ENCODE measurements at regions of chr10 and their contacts with region 1.

Region 1: DNA sequence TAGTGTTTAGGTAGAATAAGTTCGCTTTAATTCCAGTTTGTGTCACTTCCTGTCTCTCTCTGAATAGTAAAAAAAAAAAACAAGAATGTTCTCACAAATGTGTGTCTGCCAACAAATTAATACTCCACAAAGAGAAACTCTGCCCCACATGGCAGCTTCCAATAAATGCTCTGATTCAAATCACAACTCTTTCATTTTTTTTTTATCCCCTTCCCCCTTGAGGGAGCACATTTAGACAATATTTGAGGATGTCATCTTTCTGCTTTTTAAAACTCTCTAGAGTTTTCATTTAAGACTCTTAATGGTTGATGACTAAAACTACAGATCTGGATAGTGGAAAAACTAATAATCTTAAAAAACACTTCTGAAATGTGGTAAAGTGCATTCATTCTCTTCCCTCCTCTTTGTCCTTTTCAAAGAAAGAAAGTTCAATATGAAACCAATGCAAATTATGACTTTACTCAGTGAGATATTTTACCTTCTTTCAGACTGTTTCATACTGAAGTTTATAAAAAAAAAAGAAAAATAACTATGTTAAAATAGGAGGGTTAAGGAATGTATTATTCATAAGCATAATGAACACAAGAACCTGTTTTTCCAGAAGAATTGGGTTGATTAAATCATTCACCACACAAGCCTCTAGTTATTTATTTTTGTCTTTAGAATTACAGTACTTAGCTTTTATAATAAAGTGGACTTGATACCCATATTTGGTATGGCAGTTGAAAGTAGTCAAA is 42.3 kb downstream of the ARID5B start:
- DNase-seq: peak in 7 of 9 donors; percentile 25 to 58 (median 36)
- ATAC-seq: peak; percentile 65
- H3K4me3 ChIP-seq: peak overlapping the region; percentile 15
- H3K4me3 Mint-ChIP-seq: peak overlapping the region; percentile 60 to 86 (median 69)
- H3K27ac ChIP-seq: peak overlapping the region; percentile 58
- H3K27ac Mint-ChIP-seq: peak overlapping the region; percentile 47 to 94 (median 88)
- H3K4me1 ChIP-seq: peaks cover 28 to 46% of the 10 kb centered on the region in 2 donors
- H3K4me1 Mint-ChIP-seq: peaks cover 29 to 55% (median 51%) of the 10 kb centered on the region in 7 donors
- H3K27me3 ChIP-seq: no peaks in the 10 kb centered on the region
- H3K27me3 Mint-ChIP-seq: no peaks in the 10 kb centered on the region

Region 2: DNA sequence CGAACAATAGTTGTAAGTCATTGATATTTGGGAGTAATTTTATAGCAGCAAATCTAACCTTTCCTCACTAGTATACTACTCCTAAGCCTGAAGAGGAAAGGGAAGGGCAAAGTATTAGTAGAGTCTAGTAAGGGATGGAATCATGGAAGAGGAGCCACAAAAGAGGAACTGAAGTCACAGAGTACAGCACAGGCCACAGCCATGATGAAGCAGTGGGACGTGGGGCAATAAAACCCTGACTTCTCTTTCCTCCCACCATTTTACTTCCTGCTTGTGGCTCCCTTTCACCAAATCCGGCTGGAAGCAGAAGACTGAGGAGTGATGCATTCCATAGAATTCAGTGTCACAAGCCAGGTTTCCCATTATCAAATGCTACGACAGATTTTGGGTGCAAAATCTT is 222.4 kb before region 1 on chr10:
- CTCF ChIA-PET with region 1: no interaction called
- POLR2A ChIA-PET with region 1: no interaction called
- intact Hi-C with region 1: no loop called
- DNase-seq: no peak
- ATAC-seq: no peak
- H3K4me3 ChIP-seq: no peak overlapping the region
- H3K4me3 Mint-ChIP-seq: no peak overlapping the region
- H3K27ac ChIP-seq: no peak overlapping the region
- H3K27ac Mint-ChIP-seq: peak overlapping the region in 1 of 9 donors; percentile 46
- H3K4me1 ChIP-seq: no peaks in the 10 kb centered on the region
- H3K4me1 Mint-ChIP-seq: no peaks in the 10 kb centered on the region
- H3K27me3 ChIP-seq: no peaks in the 10 kb centered on the region
- H3K27me3 Mint-ChIP-seq: peaks cover 3 to 30% (median 23%) of the 10 kb centered on the region in 5 donors

Region 3: GRCh38 chr10:61923213-61923949 is 20.5 kb before region 1 on chr10:
- CTCF ChIA-PET with region 1: interaction called, 3 read pairs
- POLR2A ChIA-PET with region 1: no interaction called
- intact Hi-C with region 1: loop called in 1 of 2 experiments (anchors 2 kb)
- DNase-seq: no peak
- ATAC-seq: no peak
- H3K4me3 ChIP-seq: no peak overlapping the region
- H3K4me3 Mint-ChIP-seq: peak overlapping the region in 1 of 10 donors; percentile 39
- H3K27ac ChIP-seq: no peak overlapping the region
- H3K27ac Mint-ChIP-seq: peak overlapping the region in 4 of 9 donors; percentile 12 to 80 (median 64)
- H3K4me1 ChIP-seq: no peaks in the 10 kb centered on the region
- H3K4me1 Mint-ChIP-seq: peaks cover 23 to 69% (median 55%) of the 10 kb centered on the region in 7 donors
- H3K27me3 ChIP-seq: no peaks in the 10 kb centered on the region
- H3K27me3 Mint-ChIP-seq: no peaks in the 10 kb centered on the region

Region 4: GRCh38 chr10:61987951-61988379 is 44.1 kb after region 1 on chr10:
- CTCF ChIA-PET with region 1: no interaction called
- POLR2A ChIA-PET with region 1: no interaction called
- intact Hi-C with region 1: loop called (anchors 1 to 2 kb)
- DNase-seq: peak in 7 of 9 donors; percentile 3 to 49 (median 21)
- ATAC-seq: peak; percentile 78
- H3K4me3 ChIP-seq: no peak overlapping the region
- H3K4me3 Mint-ChIP-seq: peak overlapping the region; percentile 8 to 86 (median 62)
- H3K27ac ChIP-seq: peak overlapping the region; percentile 30
- H3K27ac Mint-ChIP-seq: peak overlapping the region; percentile 64 to 98 (median 80)
- H3K4me1 ChIP-seq: peaks cover 25 to 27% of the 10 kb centered on the region in 2 donors
- H3K4me1 Mint-ChIP-seq: peaks cover 43 to 79% (median 76%) of the 10 kb centered on the region in 7 donors
- H3K27me3 ChIP-seq: no peaks in the 10 kb centered on the region
- H3K27me3 Mint-ChIP-seq: no peaks in the 10 kb centered on the region

Region 5: GRCh38 chr10:62632071-62632809 is 688.4 kb after region 1 on chr10:
- CTCF ChIA-PET with region 1: no interaction called
- POLR2A ChIA-PET with region 1: no interaction called
- intact Hi-C with region 1: no loop called
- DNase-seq: peak in 8 of 9 donors; percentile 45 to 69 (median 54)
- ATAC-seq: peak; percentile 82
- H3K4me3 ChIP-seq: peak overlapping the region; percentile 19
- H3K4me3 Mint-ChIP-seq: peak overlapping the region in 4 of 10 donors; percentile 19 to 67 (median 45)
- H3K27ac ChIP-seq: no peak overlapping the region
- H3K27ac Mint-ChIP-seq: peak overlapping the region; percentile 3 to 89 (median 54)
- H3K4me1 ChIP-seq: peaks cover 15 to 29% of the 10 kb centered on the region in 2 donors
- H3K4me1 Mint-ChIP-seq: peaks cover 8 to 40% (median 15%) of the 10 kb centered on the region in 7 donors
- H3K27me3 ChIP-seq: no peaks in the 10 kb centered on the region
- H3K27me3 Mint-ChIP-seq: no peaks in the 10 kb centered on the region

Measured in naive thymus-derived CD4-positive, alpha-beta T cell (primary cell).